ENCODE measurements at regions of chr5 and their contacts with region 1.

Region 1: GRCh38 chr5:138128334-138128733 is 10.9 kb downstream of the NME5 start:
- DNase-seq: no peak
- H3K4me3 ChIP-seq: no peak overlapping the region
- H3K27ac ChIP-seq: no peak overlapping the region
- H3K4me1 ChIP-seq: no peaks in the 10 kb centered on the region
- H3K27me3 ChIP-seq: no peaks in the 10 kb centered on the region
- CTCF ChIP-seq: no peak

Region 2: GRCh38 chr5:137660349-137660817 is 468.0 kb before region 1 on chr5:
- CTCF ChIA-PET with region 1: interaction called, 12 read pairs
- POLR2A ChIA-PET with region 1: no interaction called
- intact Hi-C with region 1: loop called (anchors 10 kb)
- DNase-seq: peak; percentile 72
- H3K4me3 ChIP-seq: no peak overlapping the region
- H3K27ac ChIP-seq: no peak overlapping the region
- H3K4me1 ChIP-seq: no peaks in the 10 kb centered on the region
- H3K27me3 ChIP-seq: peaks cover under 1% of the 10 kb centered on the region
- CTCF ChIP-seq: peak; percentile 81

Region 3: GRCh38 chr5:137778772-137779564 is 349.4 kb before region 1 on chr5:
- CTCF ChIA-PET with region 1: interaction called, 8 read pairs
- POLR2A ChIA-PET with region 1: no interaction called
- intact Hi-C with region 1: loop called (anchors 5 kb)
- DNase-seq: peak; percentile 60
- H3K4me3 ChIP-seq: no peak overlapping the region
- H3K27ac ChIP-seq: no peak overlapping the region
- H3K4me1 ChIP-seq: no peaks in the 10 kb centered on the region
- H3K27me3 ChIP-seq: peaks cover 3% of the 10 kb centered on the region
- CTCF ChIP-seq: peak; percentile 80

Region 4: DNA sequence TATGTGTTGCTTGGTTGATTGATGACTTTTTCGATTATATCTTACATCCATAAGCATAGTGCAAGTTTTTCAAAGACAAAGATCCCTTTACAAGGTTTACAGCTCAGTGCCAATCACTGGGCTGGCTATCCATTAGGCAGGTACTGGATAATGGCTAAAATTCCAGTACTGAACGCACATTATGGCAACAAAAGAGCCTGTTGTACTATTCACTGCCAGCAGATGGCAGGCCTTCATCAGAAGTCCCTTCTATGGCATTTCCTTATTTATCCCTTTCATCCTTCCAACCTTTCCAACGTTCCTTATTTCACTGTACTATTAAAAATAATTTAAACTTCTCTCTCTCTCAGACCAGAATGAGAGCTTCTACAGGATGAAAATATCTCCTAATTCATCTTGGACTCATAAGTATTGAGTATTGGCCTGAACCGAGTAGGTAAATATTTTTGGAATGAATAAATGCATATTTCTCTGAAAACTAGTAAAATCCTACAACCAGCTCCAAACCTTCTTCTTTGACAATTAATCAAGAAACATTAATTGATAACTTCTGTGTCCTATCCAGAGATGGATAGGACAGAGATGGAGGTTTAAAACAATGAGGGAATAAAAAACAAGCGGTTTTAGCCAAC is 51.2 kb before region 1 on chr5:
- CTCF ChIA-PET with region 1: interaction called, 11 read pairs
- POLR2A ChIA-PET with region 1: no interaction called
- intact Hi-C with region 1: loop called (anchors 1 kb)
- DNase-seq: peak; percentile 74
- H3K4me3 ChIP-seq: no peak overlapping the region
- H3K27ac ChIP-seq: no peak overlapping the region
- H3K4me1 ChIP-seq: no peaks in the 10 kb centered on the region
- H3K27me3 ChIP-seq: no peaks in the 10 kb centered on the region
- CTCF ChIP-seq: peak; percentile 82

Region 5: GRCh38 chr5:138438724-138439476 is 310.6 kb after region 1 on chr5 and contains the start of gene REEP2:
- CTCF ChIA-PET with region 1: no interaction called
- POLR2A ChIA-PET with region 1: no interaction called
- intact Hi-C with region 1: no loop called
- DNase-seq: peak; percentile 79
- H3K4me3 ChIP-seq: peak within 1 kb of the TSS; percentile 78
- H3K27ac ChIP-seq: peak within 1 kb of the TSS; percentile 30
- H3K4me1 ChIP-seq: no peaks in the 10 kb centered on the region
- H3K27me3 ChIP-seq: no peaks in the 10 kb centered on the region
- CTCF ChIP-seq: no peak
- total RNA-seq, gene REEP2: 8.4 and 14.6 TPM in 2 replicates

Region 6: DNA sequence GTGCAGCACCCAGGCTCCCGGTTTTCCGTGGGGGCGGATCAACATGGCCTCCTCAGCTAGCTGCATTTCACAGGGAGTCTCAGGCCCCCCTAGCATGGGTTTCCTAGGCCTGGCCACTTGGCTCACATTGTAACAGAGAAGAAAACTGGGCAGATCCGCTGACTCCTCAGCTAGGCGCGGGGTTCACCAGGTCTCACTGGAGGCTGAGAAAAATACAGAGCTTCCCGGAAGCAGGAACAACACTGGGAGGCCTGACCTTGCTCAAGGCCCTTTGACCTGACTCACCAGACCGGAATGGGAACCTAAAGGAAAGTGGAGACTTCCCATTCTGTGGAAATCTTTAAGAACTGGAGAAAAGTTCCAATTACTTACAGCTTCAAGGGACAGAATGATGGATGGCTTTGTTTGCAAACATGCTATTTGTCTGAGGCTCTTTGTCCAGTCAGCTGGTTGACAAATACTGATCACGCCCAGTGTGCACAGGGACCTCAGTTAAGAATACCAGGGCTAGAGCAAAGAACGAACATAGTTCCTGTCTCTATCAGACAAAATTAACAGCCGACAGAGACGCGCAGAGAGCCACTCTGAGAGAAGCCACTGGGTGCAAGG is 835.5 kb after region 1 on chr5:
- CTCF ChIA-PET with region 1: no interaction called
- POLR2A ChIA-PET with region 1: no interaction called
- intact Hi-C with region 1: no loop called
- DNase-seq: no peak
- H3K4me3 ChIP-seq: no peak overlapping the region
- H3K27ac ChIP-seq: peak overlapping the region; percentile 66
- H3K4me1 ChIP-seq: peaks cover 38% of the 10 kb centered on the region
- H3K27me3 ChIP-seq: no peaks in the 10 kb centered on the region
- CTCF ChIP-seq: no peak

Measured in A673 (cell line).